Activated naive CD8-positive, alpha-beta T cell treated with anti-CD3 and anti-CD28 coated beads, Interleukin-2, amount 10 ng/mL, durations not matched to agents 7 days and 5 days (primary cell): ENCODE measurements at regions of chr9 and their contacts with region 1.

Region 1: DNA sequence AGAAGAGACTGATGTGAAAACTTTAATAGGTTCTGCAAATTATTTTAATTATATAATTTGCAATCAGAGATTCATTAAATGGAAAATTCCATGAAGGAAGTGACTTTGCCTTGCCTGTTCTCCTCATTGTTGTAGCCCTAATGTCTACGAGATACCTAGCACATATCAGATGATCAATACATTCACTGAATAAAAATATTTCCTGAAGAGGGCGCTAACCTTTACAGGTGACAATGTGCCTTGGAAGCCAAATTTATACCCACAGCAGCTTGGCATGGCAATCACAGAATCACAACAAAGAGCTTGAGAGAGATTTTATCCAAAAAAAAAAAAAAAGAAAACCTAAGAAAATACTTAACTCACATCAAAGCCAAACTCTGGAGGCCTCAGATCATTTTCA is 17.4 kb downstream of the HAUS6 start:
- DNase-seq: no peak
- ATAC-seq: peak; percentile 52
- H3K4me3 Mint-ChIP-seq: no peak overlapping the region
- H3K27ac Mint-ChIP-seq: no peak overlapping the region
- H3K4me1 Mint-ChIP-seq: peaks cover 3% of the 10 kb centered on the region
- H3K27me3 Mint-ChIP-seq: no peaks in the 10 kb centered on the region

Region 2: GRCh38 chr9:18994263-18995095 is 90.8 kb before region 1 on chr9:
- POLR2A ChIA-PET with region 1: no interaction called
- DNase-seq: no peak
- ATAC-seq: no peak
- H3K4me3 Mint-ChIP-seq: no peak overlapping the region
- H3K27ac Mint-ChIP-seq: no peak overlapping the region
- H3K4me1 Mint-ChIP-seq: no peaks in the 10 kb centered on the region
- H3K27me3 Mint-ChIP-seq: peaks cover 3% of the 10 kb centered on the region

Region 3: DNA sequence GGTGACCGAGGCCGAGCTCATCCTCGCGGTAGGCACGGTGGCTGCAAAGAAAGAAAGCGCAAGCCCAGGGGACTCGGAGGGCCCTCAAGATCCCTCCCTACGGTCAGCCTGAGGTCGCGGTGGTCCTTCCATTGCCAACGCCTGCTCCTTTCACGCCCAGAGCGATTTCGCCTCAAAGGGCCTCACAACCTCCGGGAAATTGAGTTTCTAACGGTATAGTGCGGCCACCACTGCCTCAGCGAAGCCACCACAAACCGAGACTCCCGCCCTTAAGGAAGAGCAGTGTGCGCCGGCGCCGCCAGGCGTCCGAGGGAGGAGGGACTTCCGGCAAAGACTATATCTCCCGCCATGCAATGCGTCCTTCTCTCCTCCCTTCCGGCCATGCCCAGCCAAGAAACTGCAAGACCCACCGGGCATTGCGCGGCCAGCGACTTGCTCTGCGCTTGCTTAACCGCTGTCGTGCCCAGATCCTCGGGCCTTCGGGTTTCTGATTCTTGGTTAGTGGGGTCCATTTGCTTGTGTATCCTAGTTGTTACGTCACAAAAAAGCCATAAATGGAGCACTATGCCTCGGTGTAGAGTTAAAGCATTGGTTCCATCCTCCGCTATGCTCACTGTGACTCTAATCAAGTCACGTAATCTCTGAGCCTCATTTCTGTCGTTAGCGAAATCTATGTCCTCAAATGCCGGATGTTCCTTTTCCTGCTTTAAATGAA is 17.5 kb after region 1 on chr9 and contains the start of gene HAUS6:
- POLR2A ChIA-PET with region 1: interaction called, 10 read pairs
- DNase-seq: peak; percentile 90
- ATAC-seq: peak; percentile 92
- H3K4me3 Mint-ChIP-seq: peak within 1 kb of the TSS; percentile 87
- H3K27ac Mint-ChIP-seq: peak within 1 kb of the TSS; percentile 93
- H3K4me1 Mint-ChIP-seq: peaks cover 21% of the 10 kb centered on the region
- H3K27me3 Mint-ChIP-seq: no peaks in the 10 kb centered on the region
- total RNA-seq, gene HAUS6: 23.9 to 27.6 TPM